K562 (cell line): ENCODE measurements at regions of chr2 and their contacts with region 1.

Region 1: DNA sequence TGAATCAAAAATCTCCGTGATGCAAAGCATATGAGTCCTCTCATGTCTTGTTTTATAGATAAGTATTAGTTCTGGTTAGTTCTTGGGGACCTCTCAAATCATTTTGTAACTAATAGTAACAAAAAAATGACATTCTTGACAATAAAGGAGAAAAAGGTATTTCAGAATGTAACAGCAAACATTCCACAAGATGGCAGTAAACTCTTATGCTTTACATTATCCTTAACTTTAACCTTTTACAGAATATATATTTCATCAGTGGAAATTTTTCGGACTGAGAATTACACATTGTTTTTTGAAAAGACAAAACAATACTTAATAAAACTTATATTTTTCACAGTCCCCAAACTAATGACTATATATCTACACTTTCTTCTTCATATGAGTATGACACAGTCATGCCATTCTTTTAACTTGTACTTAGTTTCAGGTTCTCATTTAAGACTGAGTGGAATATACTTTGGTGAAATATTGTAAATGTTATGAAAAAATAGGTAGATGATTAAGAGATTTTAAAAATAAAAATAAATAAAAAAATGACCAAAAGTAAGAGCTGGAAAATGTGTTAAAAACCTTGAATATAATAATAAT is 142.9 kb upstream of the NXPH2 start:
- DNase-seq: peak in 1 of 4 experiments; percentile 4
- ATAC-seq: no peak
- H3K4me3 ChIP-seq: no peak overlapping the region
- H3K27ac ChIP-seq: no peak overlapping the region
- H3K4me1 ChIP-seq: no peaks in the 10 kb centered on the region
- H3K27me3 ChIP-seq: no peaks in the 10 kb centered on the region
- CTCF ChIP-seq: peak in 1 of 3 experiments; percentile 35; a peak in 2 of 6 replicates
- EP300 ChIP-seq: no peak
- POLR2A ChIP-seq: no peak
- RAD21 ChIP-seq: peak; percentile 34 to 61

Region 2: DNA sequence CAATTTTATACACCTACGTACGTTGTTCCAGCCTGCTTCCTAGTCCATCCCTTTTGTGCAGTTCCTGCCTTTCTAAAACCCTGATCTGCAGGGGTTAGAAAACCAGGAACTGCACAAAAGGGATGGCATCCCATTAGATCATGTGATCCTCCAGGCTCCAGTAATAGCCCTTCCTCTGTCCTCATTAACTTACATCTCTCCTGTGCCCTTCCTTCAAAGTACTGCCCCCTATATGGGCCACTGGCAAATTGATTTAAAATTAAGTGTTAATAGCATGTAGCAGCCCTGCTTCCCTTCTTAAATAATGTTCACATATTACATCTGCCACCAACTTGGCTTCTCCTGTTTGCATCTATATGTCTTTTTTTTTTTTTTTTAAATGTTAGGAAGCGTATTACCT is 81.6 kb before region 1 on chr2:
- CTCF ChIA-PET with region 1: no interaction called
- POLR2A ChIA-PET with region 1: no interaction called
- in situ Hi-C with region 1: no loop called
- intact Hi-C with region 1: no loop called
- DNase-seq: no peak
- ATAC-seq: no peak
- H3K4me3 ChIP-seq: no peak overlapping the region
- H3K27ac ChIP-seq: no peak overlapping the region
- H3K4me1 ChIP-seq: no peaks in the 10 kb centered on the region
- H3K27me3 ChIP-seq: no peaks in the 10 kb centered on the region
- CTCF ChIP-seq: no peak
- EP300 ChIP-seq: no peak
- POLR2A ChIP-seq: no peak
- RAD21 ChIP-seq: no peak

Region 3: DNA sequence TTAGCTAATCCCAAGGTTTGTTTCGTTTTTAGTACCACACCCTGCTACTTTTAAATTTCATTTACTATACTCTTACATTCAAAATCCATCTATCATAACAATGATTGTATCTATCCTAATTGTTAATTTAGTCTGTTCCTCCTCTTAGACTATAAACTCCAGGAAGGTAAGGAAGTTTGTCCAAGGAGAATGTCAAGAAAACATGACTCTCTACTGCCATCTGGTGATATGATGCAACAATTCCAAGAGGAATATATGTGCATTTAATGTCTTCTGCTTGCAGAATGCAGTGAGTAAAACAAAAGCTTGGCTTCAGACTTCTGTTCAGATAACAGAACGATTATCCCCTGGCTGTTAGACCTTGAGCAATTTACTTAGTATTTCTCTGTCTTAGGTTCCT is 1940.6 kb after region 1 on chr2:
- CTCF ChIA-PET with region 1: no interaction called
- POLR2A ChIA-PET with region 1: no interaction called
- in situ Hi-C with region 1: no loop called
- intact Hi-C with region 1: loop called (anchors 10 kb)
- DNase-seq: peak in 3 of 4 experiments; percentile 6 to 32 (median 9)
- ATAC-seq: no peak
- H3K4me3 ChIP-seq: no peak overlapping the region
- H3K27ac ChIP-seq: no peak overlapping the region
- H3K4me1 ChIP-seq: no peaks in the 10 kb centered on the region
- H3K27me3 ChIP-seq: no peaks in the 10 kb centered on the region
- CTCF ChIP-seq: peak in 2 of 3 experiments; percentile 16 to 42; a peak in 2 of 6 replicates
- EP300 ChIP-seq: no peak
- POLR2A ChIP-seq: no peak
- RAD21 ChIP-seq: peak in 1 of 2 experiments; percentile 55; a peak in 3 of 4 replicates